Psoas muscle (tissue), 8 donors: ENCODE measurements at regions of chr11 and their contacts with region 1.

Region 1: GRCh38 chr11:108008656-108009496 is at the start of gene CUL5:
- DNase-seq: peak; percentile 94 to 96
- ATAC-seq: peak; percentile 96 to 98 (median 96)
- H3K4me3 ChIP-seq: peak within 1 kb of the TSS; percentile 81
- H3K27ac ChIP-seq: peak within 1 kb of the TSS; percentile 91
- H3K4me1 ChIP-seq: peaks cover 35% of the 10 kb centered on the region
- H3K27me3 ChIP-seq: no peaks in the 10 kb centered on the region
- CTCF ChIP-seq: peak; percentile 83
- total RNA-seq, gene CUL5: 57.8 to 92.2 (median 65.5) TPM

Region 2: GRCh38 chr11:108035690-108036089 is 26.8 kb after region 1 on chr11:
- intact Hi-C with region 1: loop called in 1 of 2 experiments (anchors 2 kb)
- DNase-seq: no peak
- ATAC-seq: peak; percentile 92 to 96 (median 94)
- H3K4me3 ChIP-seq: no peak overlapping the region
- H3K27ac ChIP-seq: peak overlapping the region; percentile 54
- H3K4me1 ChIP-seq: peaks cover 47% of the 10 kb centered on the region
- H3K27me3 ChIP-seq: no peaks in the 10 kb centered on the region
- CTCF ChIP-seq: no peak

Region 3: DNA sequence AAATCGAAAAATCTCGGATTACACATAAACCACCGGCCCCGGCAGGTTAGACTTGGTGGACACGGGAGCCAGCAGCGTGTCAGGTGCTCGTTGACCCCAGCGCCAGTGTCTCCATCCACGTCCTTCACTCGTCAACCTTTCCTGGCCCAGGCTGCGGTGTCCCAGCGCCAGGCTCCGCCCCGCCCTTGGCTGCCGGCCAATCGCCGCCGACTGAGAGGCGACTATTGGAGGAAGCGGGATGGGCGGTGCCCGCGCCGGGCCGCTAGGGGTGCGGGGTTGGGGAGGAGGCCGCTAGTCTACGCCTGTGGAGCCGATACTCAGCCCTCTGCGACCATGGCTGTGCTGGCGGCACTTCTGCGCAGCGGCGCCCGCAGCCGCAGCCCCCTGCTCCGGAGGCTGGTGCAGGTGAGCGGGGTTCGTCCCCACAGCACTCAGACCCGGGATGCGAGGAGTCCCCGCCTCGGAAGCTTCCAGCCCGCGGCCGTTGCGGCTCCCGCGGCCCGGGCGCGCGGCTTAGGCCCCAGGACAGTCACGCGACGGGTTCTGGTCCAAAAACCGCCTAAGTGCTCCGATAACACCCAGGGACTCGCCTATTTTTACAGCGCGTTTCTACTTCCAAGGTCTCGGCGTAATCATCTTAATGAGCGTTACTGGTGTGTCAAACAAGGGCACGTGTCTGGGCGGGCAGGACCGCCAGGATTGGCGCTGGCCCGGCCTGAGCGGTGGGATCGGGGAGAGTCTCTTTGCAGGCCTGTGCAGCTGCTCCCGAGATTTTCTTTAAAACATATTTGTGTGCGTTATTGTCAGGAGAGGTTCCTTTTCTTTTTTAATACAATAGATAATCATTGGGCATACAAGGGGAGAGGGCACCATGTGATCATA is 112.6 kb after region 1 on chr11 and contains the start of gene ACAT1:
- intact Hi-C with region 1: loop called (anchors 5 to 10 kb)
- DNase-seq: peak; percentile 99
- ATAC-seq: peak; percentile 91 to 95 (median 94)
- H3K4me3 ChIP-seq: peak within 1 kb of the TSS; percentile 87
- H3K27ac ChIP-seq: peak within 1 kb of the TSS; percentile 95
- H3K4me1 ChIP-seq: peaks cover 34% of the 10 kb centered on the region
- H3K27me3 ChIP-seq: no peaks in the 10 kb centered on the region
- CTCF ChIP-seq: peak; percentile 29
- total RNA-seq, gene ACAT1: 156 to 263 (median 208) TPM

Region 4: DNA sequence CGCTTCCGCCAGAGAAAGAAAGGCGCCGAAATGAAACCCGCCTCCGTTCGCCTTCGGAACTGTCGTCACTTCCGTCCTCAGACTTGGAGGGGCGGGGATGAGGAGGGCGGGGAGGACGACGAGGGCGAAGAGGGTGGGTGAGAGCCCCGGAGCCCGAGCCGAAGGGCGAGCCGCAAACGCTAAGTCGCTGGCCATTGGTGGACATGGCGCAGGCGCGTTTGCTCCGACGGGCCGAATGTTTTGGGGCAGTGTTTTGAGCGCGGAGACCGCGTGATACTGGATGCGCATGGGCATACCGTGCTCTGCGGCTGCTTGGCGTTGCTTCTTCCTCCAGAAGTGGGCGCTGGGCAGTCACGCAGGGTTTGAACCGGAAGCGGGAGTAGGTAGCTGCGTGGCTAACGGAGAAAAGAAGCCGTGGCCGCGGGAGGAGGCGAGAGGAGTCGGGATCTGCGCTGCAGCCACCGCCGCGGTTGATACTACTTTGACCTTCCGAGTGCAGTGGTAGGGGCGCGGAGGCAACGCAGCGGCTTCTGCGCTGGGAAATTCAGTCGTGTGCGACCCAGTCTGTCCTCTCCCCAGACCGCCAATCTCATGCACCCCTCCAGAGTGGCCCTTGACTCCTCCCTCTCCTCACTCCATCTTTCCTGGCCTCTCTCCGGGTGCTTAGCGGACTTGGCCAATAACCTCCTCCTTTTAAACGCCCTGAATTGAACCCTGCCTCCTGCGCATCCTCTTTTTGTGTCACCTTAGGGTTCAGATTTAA is 214.0 kb after region 1 on chr11 and contains the start of gene ATM:
- intact Hi-C with region 1: loop called in 1 of 2 experiments (anchors 10 kb)
- DNase-seq: peak; percentile 100
- ATAC-seq: peak; percentile 96 to 98 (median 98)
- H3K4me3 ChIP-seq: peak within 1 kb of the TSS; percentile 85
- H3K27ac ChIP-seq: peak within 1 kb of the TSS; percentile 90
- H3K4me1 ChIP-seq: peaks cover 16% of the 10 kb centered on the region
- H3K27me3 ChIP-seq: no peaks in the 10 kb centered on the region
- CTCF ChIP-seq: peak; percentile 70
- total RNA-seq, gene ATM: 14.9 to 22.7 (median 17.2) TPM